CD14-positive monocyte (primary cell): ENCODE measurements at regions of chr2 and their contacts with region 1.

Region 1: DNA sequence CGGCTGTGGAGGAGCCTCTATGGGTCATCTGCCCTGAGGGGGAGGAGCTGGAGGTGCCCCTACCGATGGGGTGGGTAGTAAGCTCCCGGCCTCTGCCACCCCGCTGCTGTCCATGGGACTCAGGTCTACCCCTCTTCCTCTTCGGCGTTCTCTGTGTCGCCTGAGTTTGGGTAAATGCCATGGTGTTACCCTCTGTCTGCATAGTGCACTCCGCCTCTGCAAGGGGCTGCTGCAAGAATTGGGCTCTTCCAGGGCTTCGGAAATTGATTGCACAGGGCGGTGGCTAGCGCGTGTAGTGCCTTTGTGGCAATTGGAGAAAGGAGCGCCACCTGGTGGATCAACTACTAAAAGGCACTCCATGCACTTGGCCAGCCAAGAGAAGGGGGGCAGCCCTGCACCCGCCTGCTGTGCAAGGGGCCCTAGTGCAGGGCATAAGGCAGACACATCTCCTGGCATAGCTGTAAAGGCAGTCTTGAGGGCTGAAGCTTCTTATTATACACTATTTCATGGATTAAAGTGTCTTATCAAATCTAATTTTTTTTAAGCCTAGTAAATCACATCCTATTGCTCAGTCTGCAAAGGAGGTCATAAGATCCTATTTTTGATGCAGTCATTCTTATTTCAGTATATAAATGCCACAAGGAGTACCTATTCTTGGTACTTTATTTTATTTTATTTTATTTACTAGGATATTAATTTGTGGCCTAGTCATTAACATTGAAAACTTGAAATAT is 308.9 kb downstream of the PDE11A start:
- DNase-seq: peak; percentile 59 to 66 (median 64)
- H3K4me3 ChIP-seq: peak overlapping the region in 1 of 3 experiments; percentile 49
- H3K4me3 Mint-ChIP-seq: peak overlapping the region; percentile 54 to 67
- H3K27ac ChIP-seq: no peak overlapping the region
- H3K27ac Mint-ChIP-seq: peak overlapping the region in 1 of 7 donors; percentile 33
- H3K4me1 ChIP-seq: peaks cover 0 to 4% of the 10 kb centered on the region in 2 donors
- H3K4me1 Mint-ChIP-seq: peaks cover 6% of the 10 kb centered on the region
- H3K27me3 ChIP-seq: no peaks in the 10 kb centered on the region
- H3K27me3 Mint-ChIP-seq: peaks cover 3 to 6% (median 6%) of the 10 kb centered on the region in 3 donors
- CTCF ChIP-seq: peak; percentile 92

Region 2: GRCh38 chr2:177717831-177718618 is 45.7 kb before region 1 on chr2:
- intact Hi-C with region 1: loop called in 1 of 2 experiments (anchors 10 kb)
- DNase-seq: no peak
- H3K4me3 ChIP-seq: no peak overlapping the region
- H3K4me3 Mint-ChIP-seq: no peak overlapping the region
- H3K27ac ChIP-seq: no peak overlapping the region
- H3K27ac Mint-ChIP-seq: no peak overlapping the region
- H3K4me1 ChIP-seq: no peaks in the 10 kb centered on the region
- H3K4me1 Mint-ChIP-seq: no peaks in the 10 kb centered on the region
- H3K27me3 ChIP-seq: no peaks in the 10 kb centered on the region
- H3K27me3 Mint-ChIP-seq: peaks cover 0 to 2% (median 0%) of the 10 kb centered on the region in 3 donors
- CTCF ChIP-seq: no peak